Spleen (tissue), 13 donors: ENCODE measurements at regions of chr10 and their contacts with region 1.

Region 1: GRCh38 chr10:80500572-80501380 is 36.9 kb upstream of the SH2D4B start:
- DNase-seq: peak; percentile 86
- H3K4me3 ChIP-seq: peak overlapping the region in 1 of 8 donors; percentile 41
- H3K27ac ChIP-seq: peak overlapping the region in 7 of 8 donors; percentile 83 to 96 (median 91)
- H3K4me1 ChIP-seq: peaks cover 76 to 100% (median 99%) of the 10 kb centered on the region in 6 donors
- H3K27me3 ChIP-seq: no peaks in the 10 kb centered on the region
- CTCF ChIP-seq: peak in 8 of 11 experiments; percentile 17 to 45 (median 32)
- POLR2A ChIP-seq: no peak

Region 2: DNA sequence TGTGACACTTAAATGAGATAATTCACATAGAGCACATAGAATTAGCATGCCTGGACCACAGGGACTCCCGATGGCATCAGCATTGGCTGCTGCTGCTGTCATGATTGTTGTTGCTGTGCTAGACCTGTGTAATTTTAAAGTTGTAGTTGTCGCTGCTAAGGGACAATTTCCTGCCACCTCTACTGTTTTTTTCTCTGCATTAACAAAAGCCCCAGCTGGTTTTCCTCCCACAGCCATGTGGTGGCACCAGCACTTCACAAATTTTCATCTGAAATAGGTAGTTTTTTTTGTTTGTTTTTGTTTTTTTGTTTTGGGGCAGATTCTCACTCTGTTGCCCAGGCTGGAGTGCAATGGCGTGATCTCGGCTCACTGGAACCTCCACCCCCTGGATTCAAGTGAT is 117.8 kb before region 1 on chr10:
- intact Hi-C with region 1: loop called (anchors 10 kb)
- DNase-seq: no peak
- H3K4me3 ChIP-seq: no peak overlapping the region
- H3K27ac ChIP-seq: no peak overlapping the region
- H3K4me1 ChIP-seq: peaks cover 0 to 17% (median 3%) of the 10 kb centered on the region in 6 donors
- H3K27me3 ChIP-seq: no peaks in the 10 kb centered on the region
- CTCF ChIP-seq: peak; percentile 48 to 72 (median 64)
- POLR2A ChIP-seq: no peak

Region 3: DNA sequence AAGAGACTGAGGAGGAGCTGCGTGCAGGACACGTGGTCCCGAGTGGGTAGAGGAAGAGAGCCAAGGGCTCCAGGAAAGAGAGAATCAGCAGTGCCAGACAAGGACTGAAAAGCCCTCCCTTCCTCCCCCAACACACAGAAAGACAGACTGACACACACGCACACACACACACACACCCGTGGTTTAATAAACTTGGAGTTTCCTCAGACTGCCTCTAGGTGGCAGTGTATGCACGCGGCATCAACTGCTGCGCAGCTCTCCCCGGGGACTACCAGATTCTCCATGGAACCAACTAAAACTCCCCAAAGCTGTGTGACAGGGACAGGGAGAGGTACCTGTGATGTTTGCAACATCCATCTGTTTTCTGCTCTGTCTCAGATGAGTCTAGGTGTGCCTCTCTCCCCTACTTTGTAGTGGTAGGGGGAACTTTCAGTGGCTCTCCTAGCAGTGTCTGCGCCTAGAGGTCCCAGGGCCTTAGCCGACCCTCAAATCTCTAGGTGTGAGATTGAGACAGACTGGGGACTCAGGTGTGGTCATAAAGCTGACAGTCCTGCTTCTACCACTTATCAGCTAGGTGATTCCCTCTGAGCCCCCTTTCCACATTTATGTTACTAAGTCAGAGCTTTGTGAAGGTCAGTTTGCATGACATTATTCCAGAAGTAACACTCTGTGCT is 56.0 kb before region 1 on chr10:
- intact Hi-C with region 1: loop called (anchors 5 kb)
- DNase-seq: peak; percentile 89
- H3K4me3 ChIP-seq: no peak overlapping the region
- H3K27ac ChIP-seq: peak overlapping the region in 6 of 8 donors; percentile 27 to 61 (median 52)
- H3K4me1 ChIP-seq: peaks cover 7 to 47% (median 20%) of the 10 kb centered on the region in 6 donors
- H3K27me3 ChIP-seq: no peaks in the 10 kb centered on the region
- CTCF ChIP-seq: peak in 9 of 11 experiments; percentile 34 to 86 (median 78)
- POLR2A ChIP-seq: no peak

Region 4: DNA sequence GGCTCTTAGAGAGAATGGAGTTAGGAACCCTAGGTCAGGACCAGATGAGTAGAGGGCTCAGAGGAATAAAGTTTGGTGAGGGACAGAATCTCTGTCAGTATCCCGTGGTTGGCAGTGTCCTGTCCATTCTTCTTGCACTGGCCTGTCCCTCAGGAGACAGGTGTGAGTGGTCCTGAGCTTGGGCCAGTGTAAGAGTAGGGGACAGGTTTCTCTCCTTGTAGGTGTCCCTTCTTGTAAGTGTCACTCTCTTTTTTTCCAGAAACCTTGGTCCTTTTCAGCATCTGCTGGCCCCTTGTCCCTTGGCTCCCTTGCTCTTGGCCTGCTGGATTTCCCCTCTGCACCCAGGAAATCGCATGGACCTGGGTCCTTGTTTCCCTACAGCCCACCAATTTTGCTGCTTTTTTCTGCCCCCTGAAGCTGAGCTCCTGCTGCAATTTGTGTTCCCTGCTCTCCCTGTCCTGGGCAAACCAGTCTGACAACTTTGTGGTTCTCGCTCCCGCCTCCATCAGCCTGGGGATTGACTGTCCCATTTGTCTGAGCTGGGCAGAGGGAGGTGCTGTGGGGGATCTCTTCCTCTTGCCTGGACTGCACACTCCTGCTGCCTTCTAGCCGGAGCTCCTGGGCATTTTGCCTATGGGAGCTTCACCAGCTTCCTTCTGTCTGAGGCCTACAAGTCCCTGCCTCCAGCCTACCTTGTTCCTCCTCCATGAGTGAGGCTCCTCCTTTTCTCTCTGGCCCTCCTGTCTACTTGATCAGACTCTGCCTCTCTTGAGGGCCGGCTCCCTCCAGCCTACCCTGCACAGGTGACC is 40.2 kb before region 1 on chr10:
- intact Hi-C with region 1: loop called (anchors 5 kb)
- DNase-seq: no peak
- H3K4me3 ChIP-seq: peak overlapping the region in 4 of 8 donors; percentile 5 to 87 (median 6)
- H3K27ac ChIP-seq: peak overlapping the region; percentile 79 to 99 (median 88)
- H3K4me1 ChIP-seq: peaks cover 93 to 100% (median 100%) of the 10 kb centered on the region in 6 donors
- H3K27me3 ChIP-seq: no peaks in the 10 kb centered on the region
- CTCF ChIP-seq: no peak
- POLR2A ChIP-seq: no peak

Region 5: DNA sequence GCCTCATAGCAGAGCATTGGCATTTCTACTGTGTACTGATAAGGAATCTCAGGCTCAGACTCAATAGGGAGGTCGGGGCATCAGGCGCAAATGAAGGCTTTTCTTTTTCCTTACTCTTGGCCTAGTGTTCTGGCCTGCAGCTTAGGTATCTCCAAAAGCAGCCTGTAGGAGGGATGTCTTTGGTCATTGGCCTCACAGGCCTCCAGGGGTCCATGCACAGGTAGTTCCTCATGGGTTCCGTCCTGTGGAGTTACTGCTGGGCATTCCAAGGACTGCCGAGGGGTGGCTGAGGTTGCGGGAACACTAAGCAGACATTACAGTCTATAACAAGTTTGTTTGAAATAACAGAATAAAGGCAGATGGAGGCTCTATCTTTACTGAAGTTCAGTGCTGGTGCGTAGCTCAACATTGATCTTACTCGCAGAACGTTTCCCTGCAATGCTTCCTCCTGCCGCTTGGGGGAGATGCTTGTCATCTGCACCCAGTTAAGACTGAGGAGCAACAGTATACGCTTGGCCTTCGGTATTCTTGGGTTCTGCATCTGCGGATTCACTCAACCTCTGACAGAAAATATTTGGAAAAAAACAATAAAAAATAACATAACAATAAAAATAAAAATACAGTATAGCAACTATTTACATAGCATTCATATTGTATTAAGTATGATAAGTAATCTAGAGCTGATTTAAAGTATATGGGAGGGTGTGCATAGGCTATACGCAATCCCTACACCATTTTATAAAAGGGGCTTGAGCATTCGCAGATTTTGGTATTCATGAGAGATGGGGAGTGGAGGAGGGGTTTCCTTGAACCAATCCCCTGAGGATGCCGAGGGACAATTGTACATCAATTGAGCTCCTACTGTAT is 95.8 kb after region 1 on chr10:
- intact Hi-C with region 1: no loop called
- DNase-seq: no peak
- H3K4me3 ChIP-seq: no peak overlapping the region
- H3K27ac ChIP-seq: peak overlapping the region in 2 of 8 donors; percentile 62 to 76
- H3K4me1 ChIP-seq: peaks cover 0 to 40% (median 20%) of the 10 kb centered on the region in 6 donors
- H3K27me3 ChIP-seq: no peaks in the 10 kb centered on the region
- CTCF ChIP-seq: peak; percentile 23 to 85 (median 72)
- POLR2A ChIP-seq: no peak